ENCODE measurements at regions of chr19 and their contacts with region 1.

Region 1: DNA sequence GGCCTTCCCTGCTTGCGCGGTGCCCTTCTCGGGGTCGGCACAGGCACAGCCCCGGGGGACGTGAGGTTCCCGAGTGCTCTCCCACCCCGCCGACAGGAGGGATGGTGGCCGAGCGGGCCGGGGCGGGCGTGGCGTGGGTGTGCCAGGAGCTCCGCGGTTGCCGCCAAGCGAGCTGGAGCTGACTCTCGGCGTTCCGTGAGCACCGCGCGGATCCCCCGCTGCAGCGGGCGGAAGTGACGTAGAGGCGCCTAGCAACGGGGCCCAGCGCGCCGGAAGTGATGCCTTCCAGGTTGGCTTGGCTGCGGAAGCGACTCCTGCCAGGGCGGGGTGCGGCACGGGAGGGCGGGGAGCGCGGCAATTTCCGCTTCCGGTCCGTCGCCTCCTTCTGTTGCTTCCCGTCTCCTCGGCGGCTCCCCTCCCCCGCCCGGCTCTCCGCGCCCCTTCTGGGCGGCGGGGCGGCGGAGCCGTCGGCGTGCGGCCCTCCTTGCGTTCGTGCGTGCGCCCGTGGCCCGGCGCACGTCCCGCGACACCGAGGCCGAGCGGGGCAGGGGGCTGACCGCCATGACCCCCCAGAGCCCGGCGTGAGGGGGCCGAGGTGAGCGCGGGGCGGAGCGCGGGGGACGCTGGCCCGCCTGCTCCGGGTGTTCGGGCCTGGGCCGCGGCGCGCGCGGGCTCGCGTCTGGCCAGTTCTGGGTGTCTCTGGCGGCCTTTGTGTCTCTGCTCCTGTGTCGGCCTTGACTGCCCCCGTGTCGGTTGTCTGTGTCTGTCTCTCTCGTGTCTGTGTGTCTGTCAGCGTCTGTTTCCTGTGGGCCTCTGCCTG is at the start of gene EPN1:
- DNase-seq: peak; percentile 93
- ATAC-seq: peak; percentile 65
- H3K4me3 Mint-ChIP-seq: peak within 1 kb of the TSS; percentile 89
- H3K27ac Mint-ChIP-seq: peak within 1 kb of the TSS; percentile 83
- H3K4me1 Mint-ChIP-seq: peaks cover 69% of the 10 kb centered on the region
- H3K27me3 Mint-ChIP-seq: no peaks in the 10 kb centered on the region
- CTCF ChIP-seq: no peak
- total RNA-seq, gene EPN1: 56.6 and 65.2 TPM in 2 replicates

Region 2: GRCh38 chr19:54967611-54968010 is 707.4 kb before region 1 on chr19:
- CTCF ChIA-PET with region 1: no interaction called
- POLR2A ChIA-PET with region 1: interaction called, 13 read pairs
- intact Hi-C with region 1: no loop called
- DNase-seq: no peak
- ATAC-seq: no peak
- H3K4me3 Mint-ChIP-seq: peak overlapping the region; percentile 33
- H3K27ac Mint-ChIP-seq: no peak overlapping the region
- H3K4me1 Mint-ChIP-seq: peaks cover 2% of the 10 kb centered on the region
- H3K27me3 Mint-ChIP-seq: no peaks in the 10 kb centered on the region
- CTCF ChIP-seq: no peak

Region 3: GRCh38 chr19:55526216-55527196 is 148.5 kb before region 1 on chr19:
- CTCF ChIA-PET with region 1: no interaction called
- POLR2A ChIA-PET with region 1: no interaction called
- intact Hi-C with region 1: no loop called
- DNase-seq: no peak
- ATAC-seq: no peak
- H3K4me3 Mint-ChIP-seq: no peak overlapping the region
- H3K27ac Mint-ChIP-seq: no peak overlapping the region
- H3K4me1 Mint-ChIP-seq: no peaks in the 10 kb centered on the region
- H3K27me3 Mint-ChIP-seq: no peaks in the 10 kb centered on the region
- CTCF ChIP-seq: no peak

Region 4: GRCh38 chr19:55580628-55581144 is 94.4 kb before region 1 on chr19 and contains the start of gene ZNF579:
- CTCF ChIA-PET with region 1: no interaction called
- POLR2A ChIA-PET with region 1: no interaction called
- intact Hi-C with region 1: loop called (anchors 2 kb)
- DNase-seq: peak; percentile 68
- ATAC-seq: peak; percentile 83
- H3K4me3 Mint-ChIP-seq: peak within 1 kb of the TSS; percentile 84
- H3K27ac Mint-ChIP-seq: peak within 1 kb of the TSS; percentile 75
- H3K4me1 Mint-ChIP-seq: peaks cover 29% of the 10 kb centered on the region
- H3K27me3 Mint-ChIP-seq: no peaks in the 10 kb centered on the region
- CTCF ChIP-seq: no peak
- total RNA-seq, gene ZNF579: 10.3 and 10.9 TPM in 2 replicates

Region 5: GRCh38 chr19:55809381-55810058 is 134.5 kb after region 1 on chr19:
- CTCF ChIA-PET with region 1: interaction called, 3 read pairs
- POLR2A ChIA-PET with region 1: interaction called, 3 read pairs
- intact Hi-C with region 1: loop called (anchors 1 kb)
- DNase-seq: peak; percentile 19
- ATAC-seq: peak; percentile 97
- H3K4me3 Mint-ChIP-seq: peak overlapping the region; percentile 52
- H3K27ac Mint-ChIP-seq: peak overlapping the region; percentile 27
- H3K4me1 Mint-ChIP-seq: peaks cover 7% of the 10 kb centered on the region
- H3K27me3 Mint-ChIP-seq: peaks cover 4% of the 10 kb centered on the region
- CTCF ChIP-seq: no peak

Measured in activated B cell treated with CpG ODN at 0.5 μM for 24 hours (primary cell).